Panc1 (cell line): ENCODE measurements at regions of chr12 and their contacts with region 1.

Region 1: GRCh38 chr12:77679686-77680085 is 151.0 kb upstream of the NAV3 start:
- DNase-seq: no peak
- ATAC-seq: no peak
- H3K4me3 ChIP-seq: no peak overlapping the region
- H3K27ac ChIP-seq: no peak overlapping the region
- H3K4me1 ChIP-seq: no peaks in the 10 kb centered on the region
- H3K27me3 ChIP-seq: no peaks in the 10 kb centered on the region
- CTCF ChIP-seq: no peak

Region 2: GRCh38 chr12:77049767-77050353 is 629.8 kb before region 1 on chr12:
- CTCF ChIA-PET with region 1: no interaction called
- POLR2A ChIA-PET with region 1: no interaction called
- in situ Hi-C with region 1: no loop called
- intact Hi-C with region 1: loop called (anchors 5 kb)
- DNase-seq: no peak
- ATAC-seq: peak; percentile 92
- H3K4me3 ChIP-seq: no peak overlapping the region
- H3K27ac ChIP-seq: no peak overlapping the region
- H3K4me1 ChIP-seq: no peaks in the 10 kb centered on the region
- H3K27me3 ChIP-seq: no peaks in the 10 kb centered on the region
- CTCF ChIP-seq: peak; percentile 78; the same call in 1 of the 2 replicates

Region 3: DNA sequence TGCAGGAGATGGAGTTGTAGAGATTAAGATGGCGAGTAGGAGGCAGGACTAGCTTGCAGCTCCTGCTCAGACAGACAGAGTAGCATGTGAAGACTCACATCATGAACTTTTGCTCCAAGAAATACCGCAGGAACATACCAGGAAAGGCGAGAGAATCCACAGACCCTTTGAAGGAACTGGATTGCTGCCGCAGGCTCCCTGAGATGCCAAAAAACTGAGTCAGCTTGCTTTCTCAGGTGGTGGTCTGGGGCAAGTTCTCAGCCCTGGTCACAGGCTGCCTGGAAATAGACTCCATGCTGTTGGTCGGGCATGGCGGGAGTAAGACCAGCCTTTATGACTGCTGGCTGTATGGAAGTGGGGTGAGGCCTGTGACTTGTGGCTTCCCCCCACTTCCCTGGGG is 12.6 kb before region 1 on chr12:
- CTCF ChIA-PET with region 1: no interaction called
- POLR2A ChIA-PET with region 1: no interaction called
- in situ Hi-C with region 1: no loop called
- intact Hi-C with region 1: no loop called
- DNase-seq: no peak
- ATAC-seq: no peak
- H3K4me3 ChIP-seq: no peak overlapping the region
- H3K27ac ChIP-seq: no peak overlapping the region
- H3K4me1 ChIP-seq: no peaks in the 10 kb centered on the region
- H3K27me3 ChIP-seq: no peaks in the 10 kb centered on the region
- CTCF ChIP-seq: no peak

Region 4: DNA sequence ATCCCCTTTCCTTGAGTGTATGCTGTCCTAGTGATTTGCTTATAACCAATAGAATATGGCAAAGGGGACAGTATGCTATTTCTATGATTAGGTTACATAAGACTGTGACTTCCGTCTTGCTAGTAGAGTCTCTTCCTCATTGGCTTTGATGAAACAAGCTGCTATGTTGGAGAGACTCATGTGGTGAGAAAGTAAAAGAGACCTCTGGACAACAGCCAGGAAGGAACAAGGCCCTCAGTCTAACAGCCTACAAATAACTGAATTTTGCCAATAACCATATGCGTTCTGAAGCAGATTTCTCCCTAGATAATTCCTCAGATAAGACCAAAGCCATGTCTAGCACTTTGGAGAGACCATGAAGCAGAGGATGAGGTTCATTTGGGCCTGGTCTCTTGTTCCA is 16.5 kb after region 1 on chr12:
- CTCF ChIA-PET with region 1: no interaction called
- POLR2A ChIA-PET with region 1: no interaction called
- in situ Hi-C with region 1: no loop called
- intact Hi-C with region 1: no loop called
- DNase-seq: no peak
- ATAC-seq: no peak
- H3K4me3 ChIP-seq: no peak overlapping the region
- H3K27ac ChIP-seq: no peak overlapping the region
- H3K4me1 ChIP-seq: no peaks in the 10 kb centered on the region
- H3K27me3 ChIP-seq: no peaks in the 10 kb centered on the region
- CTCF ChIP-seq: no peak